ENCODE measurements at regions of chr13 and their contacts with region 1.

Region 1: GRCh38 chr13:110756219-110756631 is 42.7 kb downstream of the ING1 start:
- DNase-seq: peak; percentile 95
- ATAC-seq: peak; percentile 87
- H3K4me3 ChIP-seq: no peak overlapping the region
- H3K27ac ChIP-seq: peak overlapping the region; percentile 43; the same call in 1 of the 2 replicates
- H3K4me1 ChIP-seq: peaks cover 18% of the 10 kb centered on the region
- H3K27me3 ChIP-seq: no peaks in the 10 kb centered on the region
- CTCF ChIP-seq: no peak
- POLR2A ChIP-seq: no peak
- RAD21 ChIP-seq: no peak

Region 2: DNA sequence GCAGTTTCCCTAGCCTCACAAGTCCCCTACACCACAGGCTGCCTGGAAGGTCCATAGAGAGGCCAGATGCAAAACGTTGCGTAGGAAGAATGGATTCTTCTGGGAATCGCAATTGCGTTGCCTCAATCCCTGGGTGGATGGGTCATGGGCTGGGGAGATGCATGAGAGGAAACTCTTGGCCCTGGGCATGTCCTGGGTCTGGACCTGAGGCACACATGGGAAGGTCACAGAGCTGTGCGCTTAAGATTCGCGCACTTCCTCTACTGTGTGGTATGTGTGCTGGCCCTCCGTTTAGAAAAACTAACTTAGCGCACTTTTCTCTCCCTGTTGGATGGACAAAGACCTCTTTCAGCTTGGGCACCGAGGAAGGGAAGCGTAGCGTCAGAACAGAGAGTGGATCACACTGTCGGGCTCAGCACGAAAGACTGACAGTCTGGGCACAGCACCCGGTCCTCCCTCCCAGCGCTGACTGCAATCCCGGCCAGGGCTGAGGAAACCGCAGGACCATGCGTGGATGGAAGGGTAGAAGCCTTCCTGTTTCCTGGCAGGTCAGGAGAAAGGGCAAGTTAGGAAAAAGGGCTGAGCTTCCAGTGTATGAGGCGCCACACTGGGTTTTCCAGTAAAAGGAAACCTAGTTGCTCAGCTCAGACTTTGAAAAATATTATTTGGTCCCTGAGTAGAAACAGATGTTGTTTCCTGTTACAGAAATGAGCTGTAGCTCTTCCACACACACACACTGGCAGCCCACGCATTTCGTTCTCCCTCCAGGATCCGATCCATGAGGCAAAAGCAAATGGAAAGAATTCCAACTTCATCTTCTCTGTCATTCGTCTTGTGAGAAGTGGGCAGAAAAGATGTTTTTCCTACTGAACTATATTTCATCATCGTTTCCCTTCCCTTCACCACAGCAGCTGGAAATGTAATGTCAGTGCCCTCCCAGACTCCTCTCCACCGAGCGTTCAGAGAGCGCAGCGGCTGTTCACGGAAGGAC is 43.3 kb after region 1 on chr13:
- CTCF ChIA-PET with region 1: no interaction called
- POLR2A ChIA-PET with region 1: no interaction called
- dilution Hi-C with region 1: no loop called
- in situ Hi-C with region 1: no loop called
- intact Hi-C with region 1: loop called (anchors 5 kb)
- DNase-seq: peak; percentile 95
- ATAC-seq: peak; percentile 86
- H3K4me3 ChIP-seq: peak overlapping the region; percentile 33
- H3K27ac ChIP-seq: peak overlapping the region; percentile 81
- H3K4me1 ChIP-seq: peaks cover 10% of the 10 kb centered on the region; the same call in 1 of the 2 replicates
- H3K27me3 ChIP-seq: peaks cover 2% of the 10 kb centered on the region; the same call in 1 of the 2 replicates
- CTCF ChIP-seq: no peak
- POLR2A ChIP-seq: no peak
- RAD21 ChIP-seq: no peak

Region 3: GRCh38 chr13:110971486-110971885 is 215.3 kb after region 1 on chr13:
- CTCF ChIA-PET with region 1: no interaction called
- POLR2A ChIA-PET with region 1: no interaction called
- dilution Hi-C with region 1: no loop called
- in situ Hi-C with region 1: no loop called
- intact Hi-C with region 1: no loop called
- DNase-seq: no peak
- ATAC-seq: no peak
- H3K4me3 ChIP-seq: no peak overlapping the region
- H3K27ac ChIP-seq: no peak overlapping the region
- H3K4me1 ChIP-seq: no peaks in the 10 kb centered on the region; the same call in 1 of the 2 replicates
- H3K27me3 ChIP-seq: no peaks in the 10 kb centered on the region
- CTCF ChIP-seq: no peak
- POLR2A ChIP-seq: no peak
- RAD21 ChIP-seq: no peak

Measured in IMR-90 (cell line).